ENCODE measurements at regions of chr3 and their contacts with region 1.

Region 1: DNA sequence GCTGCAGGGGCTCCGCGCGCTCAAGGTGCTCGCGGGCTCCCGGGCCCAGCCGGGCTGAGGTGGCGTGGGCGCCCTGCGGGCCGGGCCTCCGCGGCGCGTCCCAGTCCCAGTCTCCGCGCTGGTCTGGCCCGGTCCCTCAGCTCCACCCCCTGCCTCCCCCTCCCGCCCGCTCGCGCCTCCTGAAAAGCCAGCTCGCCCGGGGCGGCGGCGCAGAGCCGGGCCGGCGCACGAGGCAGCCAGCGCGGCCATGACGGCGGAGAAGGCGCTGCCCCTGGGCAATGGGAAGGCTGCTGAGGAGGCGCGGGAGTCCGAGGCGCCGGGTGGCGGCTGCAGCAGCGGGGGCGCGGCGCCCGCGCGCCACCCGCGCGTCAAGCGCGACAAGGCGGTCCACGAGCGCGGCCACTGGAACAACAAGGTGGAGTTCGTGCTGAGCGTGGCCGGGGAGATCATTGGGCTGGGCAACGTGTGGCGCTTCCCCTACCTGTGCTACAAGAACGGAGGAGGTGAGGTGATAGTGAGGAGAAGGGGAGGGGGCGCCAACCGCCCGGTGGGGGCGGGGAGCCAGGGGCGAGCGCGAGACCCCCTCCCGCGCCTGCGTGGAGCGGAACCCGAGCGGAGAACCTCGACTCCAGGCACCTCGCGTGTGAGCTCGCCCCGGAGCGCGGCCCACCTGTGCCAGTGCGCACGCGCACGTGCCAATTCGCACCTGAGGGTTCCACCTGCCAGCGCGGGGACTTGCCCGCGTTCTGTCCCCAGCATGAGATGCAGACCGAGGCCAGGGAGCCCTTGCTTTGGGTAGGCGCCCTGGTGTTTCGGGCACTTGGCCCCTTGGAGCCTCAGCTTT is at the start of gene SLC6A11:
- DNase-seq: peak; percentile 10
- ATAC-seq: peak; percentile 37
- H3K4me3 ChIP-seq: peak within 1 kb of the TSS; percentile 51 to 68 (median 60); a peak in 5 of 6 replicates
- H3K27ac ChIP-seq: peak within 1 kb of the TSS; percentile 80
- H3K4me1 ChIP-seq: peaks cover 91% of the 10 kb centered on the region
- H3K27me3 ChIP-seq: no peaks in the 10 kb centered on the region
- CTCF ChIP-seq: no peak
- EP300 ChIP-seq: no peak
- POLR2A ChIP-seq: peak; percentile 61 to 78; a peak in 3 of 4 replicates
- RAD21 ChIP-seq: no peak
- total RNA-seq, gene SLC6A11: 16.4 and 34.5 TPM in 2 replicates

Region 2: DNA sequence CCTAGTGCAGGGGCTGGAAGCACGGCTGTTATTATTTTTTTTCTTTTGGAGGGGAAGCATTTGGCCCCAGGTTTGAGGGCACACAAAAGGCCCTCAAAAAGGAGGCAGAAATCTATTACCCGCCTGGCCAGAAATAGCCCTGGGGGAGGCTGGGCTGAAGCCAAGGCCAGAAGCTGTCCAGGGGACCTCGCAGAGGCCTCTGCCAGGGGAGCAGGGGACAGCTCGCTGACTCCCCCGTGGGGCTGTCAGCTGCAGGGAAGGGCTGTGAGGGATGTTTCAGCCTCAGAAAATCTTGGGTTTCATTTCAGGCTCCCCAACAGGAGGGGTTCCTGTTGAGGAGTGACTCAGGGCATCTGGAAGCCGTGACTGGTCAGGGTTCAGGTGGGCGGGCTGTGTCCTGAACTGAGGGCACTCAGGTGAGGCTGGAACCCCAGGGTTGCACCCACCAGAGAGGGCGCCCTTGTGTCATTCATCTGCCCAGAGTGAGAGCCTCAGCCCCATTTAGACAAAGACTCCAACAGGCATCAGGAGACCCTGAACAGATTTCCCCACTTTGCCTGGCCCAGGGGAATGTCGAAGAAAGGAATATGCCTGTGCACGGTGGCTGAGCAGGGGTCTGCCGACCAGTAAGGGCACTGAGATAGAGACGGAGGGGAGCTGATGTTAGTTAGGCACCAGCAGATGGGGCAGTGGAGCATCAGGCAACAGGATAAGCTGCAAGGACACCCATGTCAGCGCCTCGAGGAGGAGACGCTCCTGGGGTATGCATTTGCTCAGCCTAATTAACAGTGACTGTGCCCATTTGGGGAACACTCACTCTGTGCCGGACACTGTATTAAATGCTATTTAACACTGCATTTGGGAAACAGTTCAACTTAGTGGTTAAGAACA is 43.7 kb before region 1 on chr3:
- CTCF ChIA-PET with region 1: interaction called, 5 read pairs
- POLR2A ChIA-PET with region 1: interaction called, 4 read pairs
- in situ Hi-C with region 1: no loop called
- intact Hi-C with region 1: loop called (anchors 2 kb)
- DNase-seq: peak; percentile 52
- ATAC-seq: peak; percentile 93
- H3K4me3 ChIP-seq: peak overlapping the region in 1 of 3 experiments; percentile 29; a peak in 1 of 6 replicates
- H3K27ac ChIP-seq: no peak overlapping the region
- H3K4me1 ChIP-seq: 0 out of 2 replicates have a peak, but pooled peaks cover 6% of the 10 kb centered on the region
- H3K27me3 ChIP-seq: peaks cover 0 to 10% of the 10 kb centered on the region in 2 experiments; a peak in 4 of 5 replicates
- CTCF ChIP-seq: peak; percentile 88
- EP300 ChIP-seq: no peak
- POLR2A ChIP-seq: no peak
- RAD21 ChIP-seq: peak; percentile 87

Region 3: DNA sequence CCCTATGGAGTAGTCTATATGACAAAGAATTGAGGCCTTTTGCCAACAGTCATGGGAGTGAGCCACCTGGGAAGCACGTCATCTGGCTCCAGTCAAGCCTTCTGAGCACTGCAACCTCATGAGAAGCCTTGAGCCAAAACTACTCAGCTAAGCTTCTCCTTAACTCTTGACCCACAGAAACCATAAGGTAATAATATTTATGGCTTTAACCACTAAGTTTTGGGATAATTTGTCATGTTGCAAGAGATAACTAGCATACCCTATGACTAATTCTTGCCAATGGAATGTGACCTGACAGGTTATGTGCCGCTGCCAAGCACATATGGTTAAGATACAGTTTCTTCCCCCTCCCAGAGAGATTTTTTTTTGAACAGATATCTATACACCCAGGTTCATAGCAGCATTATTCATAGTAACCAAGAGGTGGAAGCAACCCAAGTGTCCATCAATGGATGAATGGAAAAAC is 12.0 kb before region 1 on chr3:
- CTCF ChIA-PET with region 1: no interaction called
- POLR2A ChIA-PET with region 1: no interaction called
- in situ Hi-C with region 1: no loop called
- intact Hi-C with region 1: no loop called
- DNase-seq: no peak
- ATAC-seq: no peak
- H3K4me3 ChIP-seq: no peak overlapping the region
- H3K27ac ChIP-seq: no peak overlapping the region
- H3K4me1 ChIP-seq: peaks cover 17% of the 10 kb centered on the region
- H3K27me3 ChIP-seq: no peaks in the 10 kb centered on the region
- CTCF ChIP-seq: no peak
- EP300 ChIP-seq: no peak
- POLR2A ChIP-seq: no peak
- RAD21 ChIP-seq: no peak

Region 4: GRCh38 chr3:10855871-10856662 is 39.8 kb after region 1 on chr3:
- CTCF ChIA-PET with region 1: no interaction called
- POLR2A ChIA-PET with region 1: interaction called, 14 read pairs
- in situ Hi-C with region 1: no loop called
- intact Hi-C with region 1: loop called (anchors 1 kb)
- DNase-seq: peak; percentile 22
- ATAC-seq: peak; percentile 48
- H3K4me3 ChIP-seq: no peak overlapping the region
- H3K27ac ChIP-seq: peak overlapping the region; percentile 39
- H3K4me1 ChIP-seq: peaks cover 24% of the 10 kb centered on the region
- H3K27me3 ChIP-seq: no peaks in the 10 kb centered on the region
- CTCF ChIP-seq: no peak
- EP300 ChIP-seq: no peak
- POLR2A ChIP-seq: no peak
- RAD21 ChIP-seq: no peak

Region 5: GRCh38 chr3:10883478-10884234 is 67.4 kb after region 1 on chr3:
- CTCF ChIA-PET with region 1: no interaction called
- POLR2A ChIA-PET with region 1: no interaction called
- in situ Hi-C with region 1: no loop called
- intact Hi-C with region 1: loop called (anchors 2 kb)
- DNase-seq: peak; percentile 33
- ATAC-seq: peak; percentile 61; the same call in 2 of the 3 replicates
- H3K4me3 ChIP-seq: no peak overlapping the region
- H3K27ac ChIP-seq: no peak overlapping the region
- H3K4me1 ChIP-seq: no peaks in the 10 kb centered on the region
- H3K27me3 ChIP-seq: no peaks in the 10 kb centered on the region; a peak in 1 of 5 replicates
- CTCF ChIP-seq: peak; percentile 85
- EP300 ChIP-seq: no peak
- POLR2A ChIP-seq: no peak
- RAD21 ChIP-seq: peak; percentile 65